Calu3 (cell line): ENCODE measurements at regions of chr12 and their contacts with region 1.

Region 1: DNA sequence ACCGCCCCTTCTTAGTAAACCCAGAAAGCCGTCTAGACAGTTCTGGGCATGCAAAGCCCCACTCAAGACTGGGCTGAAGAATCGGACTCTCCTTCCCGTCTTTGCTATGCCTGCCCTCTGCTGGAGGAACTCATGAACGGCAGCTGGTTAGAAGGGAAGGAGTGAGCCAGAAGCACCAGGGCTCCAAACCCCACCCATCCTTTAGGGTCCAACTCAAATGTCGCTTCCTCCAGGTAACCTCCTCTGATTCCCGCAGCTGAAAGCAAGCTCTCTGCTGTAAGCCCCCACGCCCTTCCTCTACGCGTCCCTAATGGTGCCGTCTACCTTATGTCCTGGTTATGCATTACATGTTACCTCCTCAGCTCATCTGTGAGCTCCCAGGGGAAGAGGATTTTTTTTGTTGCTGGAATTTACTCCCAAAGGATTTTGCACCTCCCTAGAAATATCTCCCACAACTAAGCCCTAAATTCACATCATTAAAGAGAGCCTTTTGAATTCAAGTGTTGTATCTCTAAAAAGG is 59.0 kb upstream of the SCN8A start:
- DNase-seq: peak; percentile 70
- H3K4me3 Mint-ChIP-seq: no peak overlapping the region
- H3K27ac Mint-ChIP-seq: no peak overlapping the region
- H3K4me1 Mint-ChIP-seq: peaks cover 12% of the 10 kb centered on the region
- H3K27me3 Mint-ChIP-seq: peaks cover 28% of the 10 kb centered on the region
- CTCF ChIP-seq: peak; percentile 54

Region 2: GRCh38 chr12:51823875-51824565 is 292.0 kb after region 1 on chr12:
- CTCF ChIA-PET with region 1: interaction called, 4 read pairs
- intact Hi-C with region 1: loop called (anchors 1 kb)
- DNase-seq: peak; percentile 45
- H3K4me3 Mint-ChIP-seq: no peak overlapping the region
- H3K27ac Mint-ChIP-seq: no peak overlapping the region
- H3K4me1 Mint-ChIP-seq: peaks cover 8% of the 10 kb centered on the region
- H3K27me3 Mint-ChIP-seq: no peaks in the 10 kb centered on the region
- CTCF ChIP-seq: no peak

Region 3: DNA sequence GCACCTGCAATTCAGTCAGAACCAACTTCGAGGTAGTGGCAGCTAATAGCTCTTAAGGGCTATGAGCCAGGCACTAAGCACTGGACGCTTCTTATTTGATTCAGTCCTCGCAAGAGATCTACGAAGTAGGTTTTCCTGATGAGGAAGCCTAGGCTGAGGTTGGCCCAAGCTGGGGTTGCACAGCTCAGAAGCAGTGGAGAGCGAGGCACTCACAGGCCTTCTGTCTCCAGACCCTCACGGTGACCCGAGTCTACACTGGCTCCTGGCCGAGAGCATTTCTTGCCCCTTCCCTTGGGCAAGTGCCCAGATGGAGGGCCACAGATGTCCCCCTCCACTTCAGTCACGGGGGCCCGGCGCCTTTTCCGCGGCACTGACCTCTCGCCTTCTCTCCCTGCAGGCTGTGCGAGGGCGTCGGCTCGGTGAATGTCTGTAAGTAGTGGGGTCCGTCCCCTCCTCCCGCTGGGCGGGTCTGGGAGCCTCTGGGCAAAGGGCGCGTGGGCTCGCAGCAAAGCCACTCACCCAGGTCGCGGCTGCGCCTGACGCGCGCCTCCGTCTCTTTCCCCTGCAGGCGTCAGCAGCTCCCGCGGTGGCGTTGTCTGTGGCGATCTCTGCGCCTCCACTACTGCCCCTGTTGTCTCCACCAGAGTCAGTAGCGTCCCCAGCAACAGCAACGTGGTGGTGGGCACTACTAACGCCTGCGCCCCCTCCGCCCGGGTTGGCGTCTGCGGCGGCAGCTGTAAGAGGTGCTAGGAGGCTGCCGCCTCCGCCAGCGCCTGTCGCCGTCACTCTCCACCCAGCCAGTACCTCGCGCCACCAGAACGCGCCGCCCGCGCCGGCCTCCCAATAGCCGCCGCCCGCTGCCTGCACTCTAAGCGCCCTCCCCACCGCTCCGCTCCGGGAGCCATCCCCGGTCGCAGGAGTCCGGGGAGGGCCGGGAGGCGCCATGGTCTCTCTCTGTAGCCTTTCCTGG is 776.1 kb after region 1 on chr12:
- CTCF ChIA-PET with region 1: no interaction called
- intact Hi-C with region 1: no loop called
- DNase-seq: peak; percentile 75
- H3K4me3 Mint-ChIP-seq: peak overlapping the region; percentile 84
- H3K27ac Mint-ChIP-seq: peak overlapping the region; percentile 42
- H3K4me1 Mint-ChIP-seq: peaks cover 42% of the 10 kb centered on the region
- H3K27me3 Mint-ChIP-seq: peaks cover 13% of the 10 kb centered on the region
- CTCF ChIP-seq: no peak